CD4-positive, alpha-beta memory T cell (primary cell): ENCODE measurements at regions of chr6 and their contacts with region 1.

Region 1: DNA sequence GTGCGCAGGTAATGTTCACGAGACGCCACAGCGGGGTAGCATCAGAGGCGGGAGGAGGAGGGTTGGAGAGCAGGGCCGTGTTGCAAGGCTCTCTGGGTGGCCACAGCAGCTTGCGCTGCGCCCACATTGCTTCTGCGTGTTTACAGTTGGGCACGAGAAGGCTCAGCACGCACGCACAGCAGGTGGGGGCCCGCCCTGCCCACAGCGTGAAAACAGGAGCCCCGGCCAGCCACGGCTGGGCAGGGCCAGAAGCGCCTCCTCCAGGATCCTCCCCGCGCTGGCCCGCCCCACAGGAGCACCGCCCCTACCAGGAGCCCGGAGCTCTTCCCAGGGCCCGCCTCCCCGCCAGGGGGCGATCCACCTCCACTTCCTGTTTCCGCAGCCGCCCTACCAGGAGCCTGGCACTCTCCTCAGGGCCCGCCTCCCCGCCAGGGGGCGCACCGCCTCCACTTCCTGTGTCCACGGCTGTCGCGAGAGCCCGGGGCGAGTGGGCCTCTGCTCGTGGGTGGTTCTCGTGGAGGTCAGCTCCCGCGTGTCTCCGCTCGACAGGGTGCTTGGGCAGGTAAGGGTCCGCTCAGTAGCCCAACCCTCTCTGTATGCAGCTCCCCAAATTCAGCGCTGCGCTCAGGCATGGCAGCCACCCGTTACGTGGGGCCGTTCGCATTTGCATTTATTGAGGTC is at the start of gene FAM50B:
- DNase-seq: peak; percentile 90 to 92 (median 91)
- H3K4me3 ChIP-seq: peak within 1 kb of the TSS in 1 of 2 donors; percentile 63
- H3K4me3 Mint-ChIP-seq: peak within 1 kb of the TSS; percentile 79 to 87 (median 85)
- H3K27ac ChIP-seq: peak within 1 kb of the TSS; percentile 45
- H3K27ac Mint-ChIP-seq: peak within 1 kb of the TSS; percentile 66 to 96 (median 92)
- H3K4me1 ChIP-seq: peaks cover 34% of the 10 kb centered on the region
- H3K4me1 Mint-ChIP-seq: peaks cover 21 to 46% (median 29%) of the 10 kb centered on the region in 4 donors
- H3K27me3 ChIP-seq: no peaks in the 10 kb centered on the region
- H3K27me3 Mint-ChIP-seq: no peaks in the 10 kb centered on the region
- total RNA-seq, gene FAM50B: 15.0 to 15.4 TPM

Region 2: GRCh38 chr6:2765166-2765895 is 1083.7 kb before region 1 on chr6 and contains the start of gene WRNIP1:
- CTCF ChIA-PET with region 1: no interaction called
- POLR2A ChIA-PET with region 1: no interaction called
- intact Hi-C with region 1: loop called (anchors 5 kb)
- DNase-seq: peak; percentile 95 to 98 (median 98)
- H3K4me3 ChIP-seq: peak within 1 kb of the TSS; percentile 63 to 79
- H3K4me3 Mint-ChIP-seq: peak within 1 kb of the TSS; percentile 93 to 97 (median 95)
- H3K27ac ChIP-seq: peak within 1 kb of the TSS; percentile 90
- H3K27ac Mint-ChIP-seq: peak within 1 kb of the TSS; percentile 98 to 100 (median 99)
- H3K4me1 ChIP-seq: peaks cover 45% of the 10 kb centered on the region
- H3K4me1 Mint-ChIP-seq: peaks cover 33 to 63% (median 43%) of the 10 kb centered on the region in 4 donors
- H3K27me3 ChIP-seq: no peaks in the 10 kb centered on the region
- H3K27me3 Mint-ChIP-seq: peaks cover 0 to 1% of the 10 kb centered on the region in 2 donors
- total RNA-seq, gene WRNIP1: 41.1 to 42.7 TPM

Region 3: DNA sequence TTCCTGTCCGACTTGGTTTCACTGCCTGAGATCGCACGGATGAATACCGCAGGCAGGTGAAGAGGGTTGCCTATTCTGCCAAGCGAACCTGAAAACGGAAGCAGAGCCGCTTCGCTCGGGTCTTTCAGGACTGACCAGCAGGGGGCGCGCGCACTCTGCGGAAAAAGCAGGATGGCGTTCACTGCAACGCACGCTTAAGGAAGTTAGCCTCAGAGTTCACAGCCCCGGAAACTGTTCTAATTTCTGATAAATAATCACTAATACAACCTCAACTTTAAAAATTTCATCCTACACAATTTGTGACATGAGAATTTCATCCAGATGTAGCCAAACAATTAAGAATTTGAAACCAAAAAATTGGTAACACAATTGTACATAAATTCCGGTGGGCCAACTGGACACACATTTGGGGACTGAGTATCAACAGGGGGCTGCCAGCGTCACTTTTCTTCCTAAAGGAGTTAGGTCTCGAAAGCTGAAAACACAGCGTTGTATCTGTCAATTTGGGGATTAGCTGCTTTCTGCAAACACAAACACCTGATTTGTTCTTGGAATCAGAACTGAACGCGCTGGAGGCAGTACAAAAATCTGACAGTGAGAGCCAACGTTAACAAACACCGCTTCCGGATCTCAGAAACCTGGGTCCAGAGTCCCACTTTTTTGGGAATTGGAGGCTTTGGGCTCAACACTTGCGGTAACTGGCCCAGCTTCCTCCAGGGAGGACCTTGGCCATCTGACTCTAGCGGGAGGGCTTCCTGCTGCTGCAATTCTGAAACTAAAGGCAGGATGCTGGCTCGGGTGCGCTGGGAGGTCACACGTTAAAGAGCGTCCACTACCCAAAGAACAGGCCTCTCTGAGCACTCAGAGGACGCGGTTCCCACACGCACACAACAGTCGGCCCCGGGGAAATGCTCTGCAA is 106.4 kb before region 1 on chr6:
- CTCF ChIA-PET with region 1: interaction called, 29 read pairs
- POLR2A ChIA-PET with region 1: interaction called, 6 read pairs
- intact Hi-C with region 1: loop called (anchors 2 kb)
- DNase-seq: peak; percentile 79 to 84 (median 81)
- H3K4me3 ChIP-seq: peak overlapping the region in 1 of 2 donors; percentile 26
- H3K4me3 Mint-ChIP-seq: peak overlapping the region; percentile 4 to 77 (median 61)
- H3K27ac ChIP-seq: no peak overlapping the region
- H3K27ac Mint-ChIP-seq: peak overlapping the region in 5 of 7 donors; percentile 34 to 83 (median 68)
- H3K4me1 ChIP-seq: peaks cover 12% of the 10 kb centered on the region
- H3K4me1 Mint-ChIP-seq: peaks cover 6 to 13% (median 11%) of the 10 kb centered on the region in 4 donors
- H3K27me3 ChIP-seq: no peaks in the 10 kb centered on the region
- H3K27me3 Mint-ChIP-seq: peaks cover 3 to 4% of the 10 kb centered on the region in 2 donors

Region 4: DNA sequence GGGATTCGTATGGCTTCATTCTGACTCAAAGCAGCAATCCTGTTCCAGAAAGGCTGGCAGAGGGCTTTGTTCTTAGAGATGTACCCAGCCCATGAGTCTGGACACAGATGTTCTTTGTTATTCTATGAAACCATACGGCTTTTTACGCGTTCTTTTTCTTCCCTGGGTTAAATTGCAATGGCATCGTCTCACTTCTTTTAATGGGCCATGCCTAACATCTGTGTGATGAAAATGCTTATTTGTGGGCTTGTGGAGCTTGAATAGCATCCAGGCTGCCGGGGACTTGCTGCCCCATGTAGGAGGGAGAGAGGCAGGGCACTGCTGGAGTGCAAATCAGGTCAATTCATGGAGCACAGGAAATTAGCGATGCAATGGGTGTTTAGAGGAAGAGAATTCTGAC is 19.5 kb after region 1 on chr6:
- CTCF ChIA-PET with region 1: interaction called, 12 read pairs
- POLR2A ChIA-PET with region 1: interaction called, 14 read pairs
- intact Hi-C with region 1: no loop called
- DNase-seq: no peak
- H3K4me3 ChIP-seq: no peak overlapping the region
- H3K4me3 Mint-ChIP-seq: peak overlapping the region in 2 of 8 donors; percentile 44 to 66
- H3K27ac ChIP-seq: no peak overlapping the region
- H3K27ac Mint-ChIP-seq: peak overlapping the region in 3 of 7 donors; percentile 2 to 87 (median 77)
- H3K4me1 ChIP-seq: peaks cover 41% of the 10 kb centered on the region
- H3K4me1 Mint-ChIP-seq: peaks cover 19 to 43% (median 29%) of the 10 kb centered on the region in 4 donors
- H3K27me3 ChIP-seq: no peaks in the 10 kb centered on the region
- H3K27me3 Mint-ChIP-seq: peaks cover 0 to 2% of the 10 kb centered on the region in 2 donors

Region 5: GRCh38 chr6:3929281-3929798 is 80.3 kb after region 1 on chr6:
- CTCF ChIA-PET with region 1: interaction called, 40 read pairs
- POLR2A ChIA-PET with region 1: interaction called, 6 read pairs
- intact Hi-C with region 1: no loop called
- DNase-seq: no peak
- H3K4me3 ChIP-seq: no peak overlapping the region
- H3K4me3 Mint-ChIP-seq: no peak overlapping the region
- H3K27ac ChIP-seq: no peak overlapping the region
- H3K27ac Mint-ChIP-seq: no peak overlapping the region
- H3K4me1 ChIP-seq: no peaks in the 10 kb centered on the region
- H3K4me1 Mint-ChIP-seq: no peaks in the 10 kb centered on the region
- H3K27me3 ChIP-seq: no peaks in the 10 kb centered on the region
- H3K27me3 Mint-ChIP-seq: no peaks in the 10 kb centered on the region

Region 6: DNA sequence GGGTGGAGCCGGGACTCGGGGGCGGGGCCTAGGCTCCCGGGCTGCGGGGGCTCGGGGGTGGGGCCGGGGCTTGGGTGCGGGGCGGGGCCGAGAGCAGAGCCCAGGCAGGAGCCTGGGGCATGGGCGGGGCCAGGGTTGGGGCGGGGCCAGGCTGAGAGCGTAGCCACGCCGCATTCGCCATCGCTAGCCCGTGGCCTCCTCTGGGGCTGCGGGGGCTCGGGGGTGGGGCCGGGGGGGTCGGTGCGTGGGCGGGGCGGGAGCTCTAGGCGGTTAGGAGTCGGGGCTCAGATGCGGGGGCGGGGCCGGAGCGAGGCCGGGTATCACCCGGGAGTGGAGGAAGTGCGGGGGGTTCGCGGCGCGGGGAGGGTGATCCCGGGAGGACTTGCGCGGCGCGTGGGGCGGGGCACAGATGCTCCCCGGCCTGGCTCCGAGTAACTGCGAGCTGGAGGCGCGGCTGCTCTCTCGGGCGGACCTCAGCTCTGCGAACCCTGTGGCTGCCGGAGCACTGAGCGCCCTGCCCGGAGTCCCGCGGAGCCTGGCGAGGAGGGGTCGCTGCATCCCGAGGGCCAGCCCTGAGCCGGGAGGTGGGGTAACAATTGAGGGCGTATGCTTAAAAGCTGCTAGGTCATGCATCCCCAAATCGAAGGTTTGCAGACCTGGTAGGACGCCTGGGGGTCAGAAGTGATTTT is 286.7 kb after region 1 on chr6:
- CTCF ChIA-PET with region 1: interaction called, 3 read pairs
- POLR2A ChIA-PET with region 1: no interaction called
- intact Hi-C with region 1: loop called (anchors 5 kb)
- DNase-seq: peak; percentile 86 to 93 (median 87)
- H3K4me3 ChIP-seq: peak overlapping the region; percentile 43 to 72
- H3K4me3 Mint-ChIP-seq: peak overlapping the region; percentile 83 to 94 (median 88)
- H3K27ac ChIP-seq: peak overlapping the region; percentile 51
- H3K27ac Mint-ChIP-seq: peak overlapping the region; percentile 71 to 93 (median 92)
- H3K4me1 ChIP-seq: peaks cover 28% of the 10 kb centered on the region
- H3K4me1 Mint-ChIP-seq: peaks cover 21 to 50% (median 36%) of the 10 kb centered on the region in 4 donors
- H3K27me3 ChIP-seq: no peaks in the 10 kb centered on the region
- H3K27me3 Mint-ChIP-seq: no peaks in the 10 kb centered on the region